GM23248 (cell line): ENCODE measurements at regions of chr9 and their contacts with region 1.

Region 1: DNA sequence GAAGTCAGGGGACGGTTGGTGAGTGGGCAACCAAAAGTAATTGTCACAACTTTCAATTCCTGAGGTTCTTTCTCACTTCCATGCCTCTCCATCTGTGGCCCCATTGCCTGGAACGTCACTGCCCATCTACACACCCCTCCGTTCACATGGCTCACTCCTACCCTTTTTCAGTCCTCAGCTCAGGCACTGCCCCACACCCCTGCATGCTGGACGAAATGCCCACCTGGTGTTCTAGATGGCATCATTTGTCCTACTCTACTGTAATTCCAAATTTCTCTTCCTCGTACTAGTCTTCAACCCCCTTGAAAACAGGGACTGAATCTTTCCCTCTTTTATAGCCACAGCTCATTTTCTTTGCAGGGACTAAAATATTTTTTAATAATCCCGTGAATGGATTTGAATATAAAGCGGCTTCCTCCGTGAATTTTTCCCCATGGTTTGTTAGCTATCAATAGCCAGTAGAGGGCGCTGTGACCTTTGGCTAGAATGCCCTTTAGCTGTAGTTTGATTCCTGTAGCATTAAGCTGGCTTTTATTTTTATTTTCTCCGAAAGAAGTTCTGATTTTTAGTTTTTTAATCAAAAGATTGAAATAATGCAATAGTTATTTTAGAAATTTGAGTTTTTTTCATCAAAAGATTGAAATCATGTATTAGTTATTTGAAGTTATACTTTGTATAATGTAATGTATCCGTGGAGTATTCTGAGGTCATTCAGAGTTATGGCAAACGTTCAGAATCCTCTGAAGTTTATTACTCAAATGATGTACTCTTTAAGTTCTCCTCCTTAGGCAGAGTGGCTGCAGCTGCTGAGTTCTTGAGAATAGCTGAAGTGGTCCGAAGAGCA is 232.1 kb downstream of the SH3GL2 start:
- DNase-seq: peak; percentile 84
- H3K4me3 ChIP-seq: no peak overlapping the region
- H3K27ac ChIP-seq: no peak overlapping the region
- H3K4me1 ChIP-seq: no peaks in the 10 kb centered on the region
- H3K27me3 ChIP-seq: peaks cover 50% of the 10 kb centered on the region

Region 2: GRCh38 chr9:17531642-17532254 is 279.2 kb before region 1 on chr9:
- in situ Hi-C with region 1: loop called (anchors 5 kb)
- DNase-seq: peak; percentile 74
- H3K4me3 ChIP-seq: peak overlapping the region; percentile 44; the same call in 1 of the 2 replicates
- H3K27ac ChIP-seq: no peak overlapping the region
- H3K4me1 ChIP-seq: no peaks in the 10 kb centered on the region
- H3K27me3 ChIP-seq: 0 out of 2 replicates have a peak, but pooled peaks cover 3% of the 10 kb centered on the region

Region 3: GRCh38 chr9:18208154-18209059 is 397.5 kb after region 1 on chr9:
- in situ Hi-C with region 1: loop called (anchors 5 kb)
- DNase-seq: peak; percentile 64
- H3K4me3 ChIP-seq: no peak overlapping the region
- H3K27ac ChIP-seq: no peak overlapping the region
- H3K4me1 ChIP-seq: no peaks in the 10 kb centered on the region
- H3K27me3 ChIP-seq: peaks cover 27% of the 10 kb centered on the region

Region 4: DNA sequence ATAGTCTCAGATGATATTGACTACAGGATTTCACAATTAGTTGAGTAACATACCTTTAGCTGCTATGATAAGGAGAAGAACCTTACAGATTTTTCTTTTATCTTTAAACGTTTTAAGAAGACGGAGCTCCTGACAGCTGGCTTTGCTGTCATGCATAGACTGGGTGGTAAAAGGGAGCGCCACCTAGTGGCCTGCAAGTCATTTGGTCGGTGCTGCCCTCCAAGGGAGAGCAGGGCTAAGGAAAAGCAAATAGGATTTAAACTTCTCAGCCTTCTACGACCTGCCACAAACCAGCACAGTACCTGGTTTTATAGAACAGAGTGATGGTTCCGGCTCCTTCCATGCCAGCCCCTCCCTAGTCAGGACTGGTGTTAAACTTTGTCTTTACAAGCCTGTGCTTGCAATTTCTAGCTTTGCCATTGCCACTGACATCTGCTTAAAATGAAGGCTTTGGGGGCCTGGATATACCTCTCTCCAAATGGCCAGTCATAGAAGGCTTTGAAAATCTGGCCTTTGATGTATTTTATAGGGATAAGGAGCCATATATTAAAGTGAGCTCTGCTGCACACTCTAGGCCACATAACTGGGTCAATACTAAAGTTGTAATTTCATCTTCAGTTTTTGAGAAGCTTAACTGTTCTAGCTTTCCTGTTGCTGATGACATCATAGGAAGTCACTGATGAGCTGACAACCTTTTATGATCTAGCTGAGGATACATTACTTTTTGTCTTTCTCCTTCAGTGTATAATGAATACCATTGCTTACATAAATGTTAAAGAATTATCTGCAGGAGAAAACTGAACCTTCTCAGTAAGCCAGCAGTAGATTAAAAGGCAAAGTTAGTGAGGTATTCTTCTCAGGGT is 631.9 kb after region 1 on chr9:
- in situ Hi-C with region 1: loop called (anchors 25 kb)
- DNase-seq: peak; percentile 86
- H3K4me3 ChIP-seq: no peak overlapping the region
- H3K27ac ChIP-seq: 0 out of 2 replicates have a peak overlapping the region, but pooled peaks have one; percentile 3
- H3K4me1 ChIP-seq: peaks cover 49% of the 10 kb centered on the region
- H3K27me3 ChIP-seq: no peaks in the 10 kb centered on the region